ENCODE measurements at regions of chr3 and their contacts with region 1.

Region 1: GRCh38 chr3:150737874-150738713 is 24.9 kb downstream of the SIAH2 start:
- DNase-seq: peak; percentile 79
- H3K4me3 Mint-ChIP-seq: peak overlapping the region; percentile 38
- H3K27ac Mint-ChIP-seq: peak overlapping the region; percentile 99
- H3K4me1 Mint-ChIP-seq: peaks cover 73% of the 10 kb centered on the region
- H3K27me3 Mint-ChIP-seq: no peaks in the 10 kb centered on the region

Region 2: DNA sequence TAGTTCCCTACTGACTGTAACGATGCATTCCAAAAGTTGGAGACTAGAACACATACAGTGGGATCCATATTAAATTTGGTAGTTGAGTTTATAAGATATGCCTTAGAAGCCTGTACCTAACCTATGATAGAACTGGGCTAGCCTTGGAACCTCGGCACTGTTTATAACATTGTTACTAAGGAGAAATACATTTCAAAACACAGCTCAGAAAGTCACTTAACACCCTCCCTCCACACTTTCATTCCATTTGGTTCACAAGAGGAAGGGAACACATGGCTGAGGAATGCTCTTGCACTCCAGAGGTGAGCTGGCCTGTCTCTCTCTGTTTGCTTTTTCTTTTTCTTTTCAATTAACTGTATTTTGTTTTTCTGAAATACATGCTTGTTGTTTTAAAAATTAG is 378.7 kb before region 1 on chr3:
- CTCF ChIA-PET with region 1: no interaction called
- POLR2A ChIA-PET with region 1: no interaction called
- intact Hi-C with region 1: no loop called
- DNase-seq: no peak
- H3K4me3 Mint-ChIP-seq: no peak overlapping the region
- H3K27ac Mint-ChIP-seq: no peak overlapping the region
- H3K4me1 Mint-ChIP-seq: no peaks in the 10 kb centered on the region
- H3K27me3 Mint-ChIP-seq: no peaks in the 10 kb centered on the region

Region 3: GRCh38 chr3:150582620-150583019 is 155.5 kb before region 1 on chr3:
- CTCF ChIA-PET with region 1: no interaction called
- POLR2A ChIA-PET with region 1: no interaction called
- intact Hi-C with region 1: loop called (anchors 1 kb)
- DNase-seq: no peak
- H3K4me3 Mint-ChIP-seq: no peak overlapping the region
- H3K27ac Mint-ChIP-seq: peak overlapping the region; percentile 81
- H3K4me1 Mint-ChIP-seq: peaks cover 12% of the 10 kb centered on the region
- H3K27me3 Mint-ChIP-seq: no peaks in the 10 kb centered on the region

Region 4: DNA sequence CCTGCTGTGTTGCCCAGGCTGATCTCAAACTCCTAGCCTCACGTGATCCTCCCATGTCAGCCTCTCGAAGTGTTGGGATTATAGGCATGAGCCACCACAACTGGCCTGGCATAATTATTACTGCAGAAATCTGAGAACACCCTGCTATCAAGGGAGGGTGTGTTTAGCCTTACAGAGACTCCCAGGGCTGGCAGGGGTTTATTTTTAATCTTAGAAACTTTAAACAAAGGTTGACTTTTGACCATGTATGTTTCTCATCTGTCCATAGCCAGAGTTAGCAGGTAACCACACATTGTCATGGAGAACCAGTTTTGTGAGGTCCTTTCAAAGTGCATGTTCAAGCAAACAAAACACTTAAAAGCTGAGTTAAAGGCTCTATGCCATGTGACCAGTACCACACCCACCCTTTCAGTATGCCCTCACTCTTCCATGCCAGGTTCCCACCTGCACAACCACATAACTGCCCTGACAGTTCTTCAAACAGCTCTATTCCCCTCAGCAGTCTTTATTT is 13.7 kb after region 1 on chr3:
- CTCF ChIA-PET with region 1: interaction called, 3 read pairs
- POLR2A ChIA-PET with region 1: interaction called, 5 read pairs
- intact Hi-C with region 1: loop called (anchors 1 kb)
- DNase-seq: no peak
- H3K4me3 Mint-ChIP-seq: no peak overlapping the region
- H3K27ac Mint-ChIP-seq: peak overlapping the region; percentile 69
- H3K4me1 Mint-ChIP-seq: peaks cover 87% of the 10 kb centered on the region
- H3K27me3 Mint-ChIP-seq: no peaks in the 10 kb centered on the region

Region 5: DNA sequence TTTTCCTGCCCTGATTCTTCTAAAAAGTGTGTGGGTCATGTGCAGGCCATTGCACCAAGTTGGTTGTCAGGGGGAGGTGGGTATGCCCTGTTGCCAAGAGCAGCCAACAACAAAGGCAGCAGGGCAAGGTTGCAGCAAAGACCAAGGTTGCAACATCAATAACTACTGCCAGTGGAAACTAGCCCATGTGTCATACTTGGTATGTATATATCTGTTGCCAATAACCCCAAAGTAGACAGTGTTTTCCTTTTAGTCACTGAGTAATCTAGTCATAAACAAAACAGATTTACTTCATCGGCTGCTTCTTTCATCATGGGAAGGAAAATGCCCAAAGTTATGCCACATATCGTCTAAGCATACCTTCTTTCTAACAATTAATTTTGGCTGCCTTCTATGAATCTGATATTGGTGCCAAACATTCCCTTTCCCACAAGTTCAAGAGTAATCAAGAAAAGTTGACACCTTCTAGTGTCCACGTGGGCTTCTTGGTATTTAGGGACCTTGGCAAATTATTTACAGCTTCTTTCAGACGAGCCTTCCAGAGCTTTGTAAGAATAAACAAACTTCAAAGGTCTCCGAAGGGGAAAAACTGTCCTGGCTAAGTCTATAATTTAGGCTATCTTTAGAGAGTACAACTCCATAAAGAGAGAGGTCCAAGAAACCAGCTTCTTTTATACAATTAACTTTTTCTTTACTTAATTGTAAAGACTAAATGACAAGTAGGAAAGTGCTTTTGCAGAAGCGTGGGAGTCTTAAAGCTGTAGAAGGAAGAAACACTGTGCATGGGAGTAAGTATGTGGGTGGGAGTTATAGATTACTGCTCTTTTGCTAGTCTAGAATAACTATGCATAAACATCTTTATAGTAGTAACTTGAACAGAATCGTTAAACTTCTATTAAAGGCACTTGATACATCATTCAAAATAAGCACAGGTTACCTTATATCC is 1520.6 kb after region 1 on chr3:
- CTCF ChIA-PET with region 1: no interaction called
- POLR2A ChIA-PET with region 1: no interaction called
- intact Hi-C with region 1: loop called (anchors 5 kb)
- DNase-seq: peak; percentile 86
- H3K4me3 Mint-ChIP-seq: peak overlapping the region; percentile 70
- H3K27ac Mint-ChIP-seq: peak overlapping the region; percentile 95
- H3K4me1 Mint-ChIP-seq: peaks cover 83% of the 10 kb centered on the region
- H3K27me3 Mint-ChIP-seq: no peaks in the 10 kb centered on the region